ENCODE measurements at regions of chr4 and their contacts with region 1.

Region 1: DNA sequence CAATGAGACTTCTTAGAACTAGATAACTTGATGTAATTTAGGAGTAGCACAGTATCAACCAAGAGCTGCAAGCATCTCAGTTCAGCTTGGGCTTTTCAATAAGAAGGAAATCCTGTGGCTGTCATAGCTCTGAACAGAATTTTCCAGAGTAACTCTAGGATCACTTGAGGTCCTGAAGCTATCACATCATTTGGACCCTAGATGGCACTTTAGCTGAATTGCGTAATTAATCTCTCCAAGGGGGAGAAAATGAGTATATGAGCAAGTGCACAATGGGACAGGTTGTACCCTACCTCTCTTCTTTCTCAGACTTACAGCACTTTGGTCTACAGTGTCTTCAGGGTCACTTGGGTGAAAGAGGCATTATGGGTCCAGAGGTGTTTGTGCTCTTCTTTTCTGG is 45.2 kb downstream of the SLC4A4 start:
- DNase-seq: no peak
- H3K4me3 ChIP-seq: no peak overlapping the region
- H3K27ac ChIP-seq: no peak overlapping the region
- H3K4me1 ChIP-seq: no peaks in the 10 kb centered on the region
- H3K27me3 ChIP-seq: no peaks in the 10 kb centered on the region
- CTCF ChIP-seq: no peak
- POLR2A ChIP-seq: no peak

Region 2: GRCh38 chr4:71343670-71344466 is 40.1 kb before region 1 on chr4:
- intact Hi-C with region 1: loop called (anchors 2 kb)
- DNase-seq: no peak
- H3K4me3 ChIP-seq: no peak overlapping the region
- H3K27ac ChIP-seq: no peak overlapping the region
- H3K4me1 ChIP-seq: no peaks in the 10 kb centered on the region
- H3K27me3 ChIP-seq: no peaks in the 10 kb centered on the region
- CTCF ChIP-seq: no peak
- POLR2A ChIP-seq: no peak

Region 3: DNA sequence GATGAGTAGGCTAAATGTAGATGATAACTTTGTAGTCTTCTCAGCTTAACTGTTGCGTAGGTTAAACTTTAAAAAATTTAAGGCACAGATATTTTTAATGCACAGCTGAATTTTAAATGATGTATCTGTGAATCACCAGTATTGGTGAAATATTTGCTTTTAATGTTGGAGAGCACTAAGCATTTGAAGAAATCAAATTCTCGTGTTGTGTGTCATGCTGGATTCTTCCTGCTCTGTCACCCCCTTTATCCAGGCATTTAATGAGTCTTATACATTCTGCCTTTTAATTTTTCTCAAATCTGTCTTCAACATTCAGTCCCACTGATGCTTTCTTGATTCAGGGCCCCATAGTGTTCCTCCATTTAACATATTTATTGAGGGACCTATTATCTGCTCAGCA is 31.5 kb after region 1 on chr4:
- intact Hi-C with region 1: no loop called
- DNase-seq: no peak
- H3K4me3 ChIP-seq: no peak overlapping the region
- H3K27ac ChIP-seq: no peak overlapping the region
- H3K4me1 ChIP-seq: no peaks in the 10 kb centered on the region
- H3K27me3 ChIP-seq: no peaks in the 10 kb centered on the region
- CTCF ChIP-seq: no peak
- POLR2A ChIP-seq: no peak

Region 4: GRCh38 chr4:71882113-71882841 is 498.3 kb after region 1 on chr4:
- intact Hi-C with region 1: no loop called
- DNase-seq: no peak
- H3K4me3 ChIP-seq: no peak overlapping the region
- H3K27ac ChIP-seq: no peak overlapping the region
- H3K4me1 ChIP-seq: no peaks in the 10 kb centered on the region
- H3K27me3 ChIP-seq: no peaks in the 10 kb centered on the region
- CTCF ChIP-seq: no peak
- POLR2A ChIP-seq: no peak

Region 5: DNA sequence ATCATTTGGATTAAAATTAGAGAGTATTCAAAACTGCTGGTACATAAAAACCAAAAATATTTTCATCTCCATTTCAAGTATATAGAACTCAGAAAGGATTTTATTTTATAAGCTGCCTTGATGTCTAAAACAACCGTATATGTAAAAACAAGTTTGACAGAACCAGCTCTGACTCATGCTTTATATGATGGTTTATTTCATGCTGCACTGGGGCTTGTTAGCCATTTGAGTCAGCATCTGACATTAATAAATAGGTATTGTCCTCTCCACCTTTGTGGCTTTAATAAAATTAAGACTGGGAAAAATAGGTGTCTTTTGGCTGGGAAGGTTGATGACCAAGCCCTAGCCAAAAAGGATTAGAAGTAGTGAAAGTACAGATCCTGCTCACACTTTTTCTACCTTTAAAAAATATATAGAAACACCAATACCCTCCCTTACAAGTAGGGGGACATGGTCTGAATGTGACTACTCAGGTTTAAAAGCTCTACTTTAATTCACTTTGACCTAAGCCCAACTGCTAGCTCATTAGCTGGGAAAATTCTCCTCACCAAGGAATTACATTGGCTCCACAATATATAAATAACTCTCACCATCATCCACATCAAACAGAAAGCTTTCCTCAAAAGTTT is 956.9 kb after region 1 on chr4:
- intact Hi-C with region 1: no loop called
- DNase-seq: no peak
- H3K4me3 ChIP-seq: no peak overlapping the region
- H3K27ac ChIP-seq: no peak overlapping the region
- H3K4me1 ChIP-seq: no peaks in the 10 kb centered on the region
- H3K27me3 ChIP-seq: no peaks in the 10 kb centered on the region
- CTCF ChIP-seq: no peak
- POLR2A ChIP-seq: no peak

Measured in breast epithelium (tissue), 4 donors.